Activated T-helper 1 cell treated with anti-CD3 and anti-CD28 coated beads, Interleukin-12 subunit alpha, Interleukin-12 subunit beta, Interleukin-2, Interleukin-4 antibody, amounts not matched to agents 30 ng/mL and 10 ng/mL and 1 ng/mL, durations not matched to agents 14 hours and 24 hours and 36 hours (primary cell): ENCODE measurements at regions of chr1 and their contacts with region 1.

Region 1: GRCh38 chr1:243343970-243344937 is 88.4 kb downstream of the SDCCAG8 start:
- DNase-seq: no peak
- H3K4me3 Mint-ChIP-seq: no peak overlapping the region
- H3K27ac Mint-ChIP-seq: no peak overlapping the region
- H3K4me1 Mint-ChIP-seq: peaks cover 5% of the 10 kb centered on the region
- H3K27me3 Mint-ChIP-seq: no peaks in the 10 kb centered on the region

Region 2: GRCh38 chr1:243409284-243409683 is 65.0 kb after region 1 on chr1:
- intact Hi-C with region 1: loop called (anchors 1 kb)
- DNase-seq: no peak
- H3K4me3 Mint-ChIP-seq: no peak overlapping the region
- H3K27ac Mint-ChIP-seq: no peak overlapping the region
- H3K4me1 Mint-ChIP-seq: peaks cover 23% of the 10 kb centered on the region
- H3K27me3 Mint-ChIP-seq: no peaks in the 10 kb centered on the region

Region 3: GRCh38 chr1:243482141-243483022 is 138.1 kb after region 1 on chr1:
- intact Hi-C with region 1: loop called (anchors 5 kb)
- DNase-seq: no peak
- H3K4me3 Mint-ChIP-seq: peak overlapping the region; percentile 65
- H3K27ac Mint-ChIP-seq: no peak overlapping the region
- H3K4me1 Mint-ChIP-seq: peaks cover 22% of the 10 kb centered on the region
- H3K27me3 Mint-ChIP-seq: peaks cover 7% of the 10 kb centered on the region

Region 4: GRCh38 chr1:243748706-243749283 is 404.5 kb after region 1 on chr1:
- intact Hi-C with region 1: loop called (anchors 1 kb)
- DNase-seq: no peak
- H3K4me3 Mint-ChIP-seq: no peak overlapping the region
- H3K27ac Mint-ChIP-seq: no peak overlapping the region
- H3K4me1 Mint-ChIP-seq: no peaks in the 10 kb centered on the region
- H3K27me3 Mint-ChIP-seq: no peaks in the 10 kb centered on the region

Region 5: DNA sequence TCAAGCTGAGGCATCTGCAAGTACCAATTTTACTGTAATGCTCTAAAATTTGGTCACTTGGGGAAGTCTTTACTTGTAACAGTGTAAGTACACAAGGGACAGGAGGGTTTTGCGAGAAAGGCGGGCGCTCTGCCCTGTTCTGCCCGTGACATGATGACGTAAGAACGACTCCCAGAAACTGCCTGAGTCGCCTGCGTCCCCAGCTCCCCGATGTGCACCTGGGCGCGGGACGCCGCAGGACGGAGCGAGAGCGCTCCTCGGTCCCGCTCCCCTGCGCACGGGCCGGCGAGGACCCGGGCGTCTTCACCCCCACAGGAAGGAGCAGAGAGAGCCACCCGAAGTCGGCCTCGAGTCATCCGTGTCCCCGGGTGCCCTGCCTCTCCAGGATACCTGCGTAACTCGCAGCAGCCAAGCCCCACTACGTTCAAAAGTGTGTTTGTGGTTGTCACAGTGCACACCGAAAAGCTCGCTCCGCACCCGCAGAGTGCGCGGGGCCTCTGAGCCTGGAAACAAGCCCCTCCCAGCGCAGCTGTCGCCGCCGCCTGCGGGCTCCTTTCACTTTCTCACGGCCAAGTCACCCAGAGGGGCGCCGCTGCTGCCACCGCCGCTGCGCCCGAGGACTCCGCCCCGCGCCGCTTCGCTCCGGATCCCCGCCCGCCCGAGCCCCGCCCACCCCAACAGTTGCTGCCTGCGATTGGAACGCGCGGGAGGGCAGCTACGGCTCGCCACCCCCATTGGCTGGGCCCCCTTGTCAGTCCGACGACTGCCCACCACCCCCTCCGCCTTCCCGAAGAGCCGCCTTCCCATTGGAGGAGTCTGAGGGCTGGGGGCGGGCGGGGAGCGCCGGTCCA is 703.6 kb after region 1 on chr1:
- intact Hi-C with region 1: loop called (anchors 2 kb)
- DNase-seq: peak; percentile 93
- H3K4me3 Mint-ChIP-seq: peak overlapping the region; percentile 92
- H3K27ac Mint-ChIP-seq: peak overlapping the region; percentile 91
- H3K4me1 Mint-ChIP-seq: peaks cover 36% of the 10 kb centered on the region
- H3K27me3 Mint-ChIP-seq: peaks cover 30% of the 10 kb centered on the region

Region 6: DNA sequence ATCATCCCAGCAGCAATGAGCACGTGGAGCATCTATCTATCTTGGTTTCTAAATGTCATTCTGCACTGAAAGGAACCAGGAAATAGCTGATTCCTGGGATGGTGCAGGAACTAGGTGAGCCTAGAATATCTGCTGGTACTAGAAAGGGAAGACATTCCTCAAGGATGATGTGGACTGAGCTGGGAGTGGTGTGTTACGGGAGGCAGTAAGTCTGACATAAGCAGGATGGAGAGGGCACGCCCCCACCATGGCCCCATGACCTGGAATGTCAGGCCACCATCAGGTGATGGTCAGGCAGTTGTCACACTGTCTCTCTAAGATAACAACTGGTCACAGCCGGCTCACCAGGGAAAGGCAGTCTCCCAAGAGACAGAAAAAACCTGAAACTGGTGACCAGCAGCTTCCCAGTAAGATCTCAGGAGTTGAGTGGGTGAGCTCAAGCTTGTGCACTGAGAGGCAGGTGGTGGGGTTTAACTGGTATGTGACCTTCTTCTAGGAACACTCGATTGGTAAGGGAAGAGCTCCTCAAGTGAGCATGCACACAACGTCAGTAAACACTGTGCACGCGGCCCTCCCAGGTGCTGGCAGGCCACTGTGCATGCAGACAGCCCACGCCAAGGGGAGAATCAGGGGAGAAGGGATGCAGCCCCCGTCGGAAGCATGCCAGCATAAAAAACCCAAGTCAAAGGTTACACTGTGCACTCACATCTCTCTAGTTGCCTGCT is 958.8 kb after region 1 on chr1:
- intact Hi-C with region 1: loop called (anchors 1 kb)
- DNase-seq: no peak
- H3K4me3 Mint-ChIP-seq: no peak overlapping the region
- H3K27ac Mint-ChIP-seq: no peak overlapping the region
- H3K4me1 Mint-ChIP-seq: peaks cover 12% of the 10 kb centered on the region
- H3K27me3 Mint-ChIP-seq: peaks cover 4% of the 10 kb centered on the region